Endothelial cell of umbilical vein (primary cell): ENCODE measurements at regions of chr1 and their contacts with region 1.

Region 1: GRCh38 chr1:159891275-159892157 is 8.4 kb downstream of the CFAP45 start:
- DNase-seq: peak; percentile 95
- H3K4me3 ChIP-seq: no peak overlapping the region
- H3K27ac ChIP-seq: peak overlapping the region; percentile 27
- H3K4me1 ChIP-seq: peaks cover 21% of the 10 kb centered on the region
- H3K27me3 ChIP-seq: no peaks in the 10 kb centered on the region
- CTCF ChIP-seq: peak; percentile 97 to 99
- POLR2A ChIP-seq: no peak

Region 2: GRCh38 chr1:159132271-159132881 is 759.1 kb before region 1 on chr1:
- CTCF ChIA-PET with region 1: interaction called, 25 read pairs
- POLR2A ChIA-PET with region 1: no interaction called
- dilution Hi-C with region 1: no loop called
- intact Hi-C with region 1: loop called (anchors 1 kb)
- DNase-seq: peak; percentile 68
- H3K4me3 ChIP-seq: no peak overlapping the region
- H3K27ac ChIP-seq: no peak overlapping the region
- H3K4me1 ChIP-seq: no peaks in the 10 kb centered on the region
- H3K27me3 ChIP-seq: peaks cover 15 to 16% of the 10 kb centered on the region in 2 experiments
- CTCF ChIP-seq: peak; percentile 76 to 89
- POLR2A ChIP-seq: no peak

Region 3: DNA sequence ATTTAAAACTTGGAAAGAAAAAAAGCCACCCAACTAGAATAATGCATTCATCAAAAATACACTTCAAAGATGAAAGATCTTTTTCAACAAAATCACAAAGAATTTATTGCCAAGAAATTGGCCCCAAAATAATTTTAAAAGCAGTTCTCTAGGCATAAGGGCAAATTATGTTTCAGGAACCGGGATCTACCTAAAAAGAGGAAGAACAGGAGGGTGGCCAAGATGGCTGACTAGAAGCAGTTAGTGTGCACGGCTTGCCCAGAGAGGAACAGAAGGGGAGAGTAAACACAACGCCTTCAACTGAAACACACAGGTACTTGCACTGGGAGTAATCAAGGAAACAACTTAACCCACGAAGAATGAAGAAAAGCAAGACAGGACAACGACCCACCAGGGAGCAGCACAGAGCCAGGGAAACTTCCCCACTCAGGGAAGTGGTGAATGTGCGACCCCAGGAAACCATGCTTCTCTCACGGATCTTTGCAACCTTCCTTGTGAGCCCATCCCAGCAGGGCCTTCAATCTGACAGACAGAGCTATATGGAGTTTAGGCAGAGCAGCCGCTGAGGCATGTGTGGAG is 640.8 kb before region 1 on chr1:
- CTCF ChIA-PET with region 1: no interaction called
- POLR2A ChIA-PET with region 1: no interaction called
- dilution Hi-C with region 1: no loop called
- intact Hi-C with region 1: loop called (anchors 1 kb)
- DNase-seq: peak; percentile 28
- H3K4me3 ChIP-seq: no peak overlapping the region
- H3K27ac ChIP-seq: no peak overlapping the region
- H3K4me1 ChIP-seq: no peaks in the 10 kb centered on the region
- H3K27me3 ChIP-seq: no peaks in the 10 kb centered on the region
- CTCF ChIP-seq: peak; percentile 21 to 38
- POLR2A ChIP-seq: no peak

Region 4: GRCh38 chr1:159700312-159700711 is 191.2 kb before region 1 on chr1:
- CTCF ChIA-PET with region 1: no interaction called
- POLR2A ChIA-PET with region 1: no interaction called
- dilution Hi-C with region 1: no loop called
- intact Hi-C with region 1: no loop called
- DNase-seq: no peak
- H3K4me3 ChIP-seq: no peak overlapping the region
- H3K27ac ChIP-seq: no peak overlapping the region
- H3K4me1 ChIP-seq: no peaks in the 10 kb centered on the region
- H3K27me3 ChIP-seq: no peaks in the 10 kb centered on the region
- CTCF ChIP-seq: no peak
- POLR2A ChIP-seq: no peak

Region 5: DNA sequence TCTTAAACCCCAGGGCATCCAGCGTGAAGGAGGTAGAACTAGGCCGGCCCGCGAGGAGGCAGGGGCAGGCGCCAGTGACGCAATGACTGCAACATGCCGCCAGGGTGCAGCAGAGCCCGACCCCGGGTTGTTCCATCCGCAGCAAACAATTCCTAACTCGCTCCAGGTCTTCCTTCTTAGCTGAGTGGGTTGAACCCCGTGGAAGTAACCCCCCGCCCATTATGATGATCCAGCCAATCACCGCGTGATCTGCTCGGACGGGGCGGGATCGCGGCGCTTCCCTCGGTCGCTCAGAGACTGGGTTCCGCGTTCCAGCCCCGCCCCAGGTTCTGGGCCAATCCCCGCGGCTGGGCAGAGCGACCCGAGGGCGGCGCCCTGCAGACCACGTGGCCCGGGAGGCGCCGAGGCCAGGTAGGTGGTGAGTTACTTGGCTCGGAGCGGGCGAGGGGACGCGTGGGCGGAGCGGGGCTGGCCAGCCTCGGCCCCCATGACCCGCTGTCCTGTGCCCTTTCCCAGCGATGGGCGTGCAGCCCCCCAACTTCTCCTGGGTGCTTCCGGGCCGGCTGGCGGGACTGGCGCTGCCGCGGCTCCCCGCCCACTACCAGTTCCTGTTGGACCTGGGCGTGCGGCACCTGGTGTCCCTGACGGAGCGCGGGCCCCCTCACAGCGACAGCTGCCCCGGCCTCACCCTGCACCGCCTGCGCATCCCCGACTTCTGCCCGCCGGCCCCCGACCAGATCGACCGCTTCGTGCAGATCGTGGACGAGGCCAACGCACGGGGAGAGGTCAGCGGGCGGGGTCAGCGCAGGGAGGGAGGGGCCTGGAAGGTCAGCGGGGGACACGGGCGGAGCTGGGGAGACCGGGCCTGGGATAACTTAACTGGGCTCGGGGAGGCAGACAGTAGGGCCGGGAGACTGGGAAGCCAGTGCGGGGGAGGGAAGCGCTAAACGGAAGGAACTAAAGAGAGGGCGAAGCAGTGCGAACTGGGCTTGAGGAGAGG is 110.6 kb before region 1 on chr1 and contains the start of gene DUSP23:
- CTCF ChIA-PET with region 1: interaction called, 66 read pairs
- POLR2A ChIA-PET with region 1: no interaction called
- dilution Hi-C with region 1: no loop called
- intact Hi-C with region 1: loop called (anchors 1 kb)
- DNase-seq: peak; percentile 100
- H3K4me3 ChIP-seq: peak within 1 kb of the TSS; percentile 35 to 80 (median 62)
- H3K27ac ChIP-seq: peak within 1 kb of the TSS; percentile 92
- H3K4me1 ChIP-seq: peaks cover 46% of the 10 kb centered on the region
- H3K27me3 ChIP-seq: no peaks in the 10 kb centered on the region
- CTCF ChIP-seq: peak; percentile 90 to 97
- POLR2A ChIP-seq: peak; percentile 10
- total RNA-seq, gene DUSP23: 82.5 and 126 TPM in 2 replicates

Region 6: GRCh38 chr1:159829273-159829634 is 62.3 kb before region 1 on chr1:
- CTCF ChIA-PET with region 1: interaction called, 18 read pairs
- POLR2A ChIA-PET with region 1: no interaction called
- dilution Hi-C with region 1: no loop called
- intact Hi-C with region 1: no loop called
- DNase-seq: peak; percentile 20
- H3K4me3 ChIP-seq: no peak overlapping the region
- H3K27ac ChIP-seq: no peak overlapping the region
- H3K4me1 ChIP-seq: no peaks in the 10 kb centered on the region
- H3K27me3 ChIP-seq: peaks cover 0 to 2% of the 10 kb centered on the region in 2 experiments
- CTCF ChIP-seq: peak; percentile 43 to 57
- POLR2A ChIP-seq: no peak

Region 7: GRCh38 chr1:159924981-159925712 is 33.6 kb after region 1 on chr1 and contains the start of gene TAGLN2:
- CTCF ChIA-PET with region 1: interaction called, 71 read pairs
- POLR2A ChIA-PET with region 1: interaction called, 8 read pairs
- dilution Hi-C with region 1: no loop called
- intact Hi-C with region 1: loop called (anchors 1 kb)
- DNase-seq: peak; percentile 93
- H3K4me3 ChIP-seq: peak within 1 kb of the TSS; percentile 46 to 78 (median 71)
- H3K27ac ChIP-seq: peak within 1 kb of the TSS; percentile 98
- H3K4me1 ChIP-seq: peaks cover 27% of the 10 kb centered on the region
- H3K27me3 ChIP-seq: no peaks in the 10 kb centered on the region
- CTCF ChIP-seq: no peak
- POLR2A ChIP-seq: peak; percentile 98
- total RNA-seq, gene TAGLN2: 646 and 750 TPM in 2 replicates